ENCODE measurements at regions of chr1 and their contacts with region 1.

Region 1: DNA sequence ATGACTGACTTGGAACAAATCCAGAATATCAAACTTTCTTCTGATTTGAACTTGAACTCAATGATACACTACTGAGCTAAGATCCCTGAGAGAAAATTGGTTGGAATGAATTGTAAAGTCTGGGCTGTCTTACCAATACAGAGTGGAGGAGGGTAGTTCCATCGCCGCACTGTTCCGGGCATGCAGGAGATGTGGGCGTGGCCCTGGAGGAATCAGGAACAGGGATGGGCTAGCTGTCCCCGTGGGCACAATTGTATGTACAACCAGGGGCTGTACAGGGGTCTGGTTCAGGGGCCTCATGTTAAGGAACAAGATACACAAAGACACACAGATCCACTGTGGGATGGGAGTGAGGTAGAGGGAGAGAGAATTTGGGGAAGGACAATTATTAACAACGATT is 144.3 kb downstream of the ZSCAN20 start:
- DNase-seq: no peak
- H3K4me3 ChIP-seq: no peak overlapping the region
- H3K27ac ChIP-seq: no peak overlapping the region
- H3K4me1 ChIP-seq: no peaks in the 10 kb centered on the region
- H3K27me3 ChIP-seq: no peaks in the 10 kb centered on the region
- CTCF ChIP-seq: no peak
- POLR2A ChIP-seq: no peak

Region 2: DNA sequence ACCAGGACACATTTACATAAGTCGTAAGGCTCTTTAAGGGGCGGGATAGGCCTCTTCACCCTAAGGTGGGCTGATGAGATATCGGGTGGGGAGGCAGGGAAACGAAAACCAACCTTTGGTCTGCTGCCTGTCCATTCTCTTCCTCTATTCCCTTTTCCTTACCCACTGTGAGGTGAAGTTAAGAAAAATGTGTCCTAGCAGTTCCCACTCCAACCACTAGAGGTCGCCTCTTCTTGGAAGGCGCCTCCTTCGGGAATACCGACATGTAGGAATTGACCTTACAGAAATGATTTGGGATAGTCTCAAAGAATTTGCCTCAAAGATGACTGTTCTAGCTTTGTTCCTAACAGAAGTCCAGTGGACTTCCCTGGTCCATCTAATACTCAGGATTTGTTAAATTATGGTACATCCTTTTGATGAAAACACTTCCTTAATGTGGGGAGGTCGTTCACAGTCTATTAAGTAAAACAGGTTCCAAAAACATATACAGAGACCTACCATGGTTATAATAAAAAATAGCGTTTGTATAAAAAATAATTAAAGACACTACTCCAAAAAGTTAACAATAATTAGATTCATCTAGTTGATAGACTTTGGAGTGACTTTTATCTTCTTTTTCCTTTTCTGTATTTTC is 521.7 kb before region 1 on chr1:
- intact Hi-C with region 1: loop called in 1 of 2 experiments (anchors 10 kb)
- DNase-seq: peak in 6 of 7 donors; percentile 51 to 82 (median 64)
- H3K4me3 ChIP-seq: no peak overlapping the region
- H3K27ac ChIP-seq: no peak overlapping the region
- H3K4me1 ChIP-seq: peaks cover 6 to 14% of the 10 kb centered on the region in 2 donors
- H3K27me3 ChIP-seq: no peaks in the 10 kb centered on the region
- CTCF ChIP-seq: peak; percentile 84 to 99 (median 88)
- POLR2A ChIP-seq: no peak

Region 3: DNA sequence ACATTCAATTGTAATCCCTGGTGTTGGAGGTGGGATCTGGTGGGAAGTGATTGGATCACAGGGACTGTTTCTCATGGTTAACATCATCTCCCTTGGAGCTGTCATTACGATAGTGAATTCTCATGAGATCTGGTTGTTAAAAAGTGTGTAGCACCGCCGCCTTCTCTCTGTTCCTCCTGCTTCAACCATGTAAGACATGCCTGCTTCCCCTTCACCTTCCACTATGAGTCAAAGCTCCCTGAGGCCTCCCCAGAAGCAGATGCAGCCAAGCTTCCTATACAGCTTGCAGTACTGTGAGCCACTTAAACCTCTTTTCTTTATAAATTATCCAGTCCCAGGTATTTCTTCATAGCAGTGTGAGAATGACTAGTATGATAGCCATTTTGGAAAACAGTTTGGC is 404.8 kb before region 1 on chr1:
- intact Hi-C with region 1: no loop called
- DNase-seq: no peak
- H3K4me3 ChIP-seq: no peak overlapping the region
- H3K27ac ChIP-seq: no peak overlapping the region
- H3K4me1 ChIP-seq: no peaks in the 10 kb centered on the region
- H3K27me3 ChIP-seq: no peaks in the 10 kb centered on the region
- CTCF ChIP-seq: no peak
- POLR2A ChIP-seq: no peak

Region 4: DNA sequence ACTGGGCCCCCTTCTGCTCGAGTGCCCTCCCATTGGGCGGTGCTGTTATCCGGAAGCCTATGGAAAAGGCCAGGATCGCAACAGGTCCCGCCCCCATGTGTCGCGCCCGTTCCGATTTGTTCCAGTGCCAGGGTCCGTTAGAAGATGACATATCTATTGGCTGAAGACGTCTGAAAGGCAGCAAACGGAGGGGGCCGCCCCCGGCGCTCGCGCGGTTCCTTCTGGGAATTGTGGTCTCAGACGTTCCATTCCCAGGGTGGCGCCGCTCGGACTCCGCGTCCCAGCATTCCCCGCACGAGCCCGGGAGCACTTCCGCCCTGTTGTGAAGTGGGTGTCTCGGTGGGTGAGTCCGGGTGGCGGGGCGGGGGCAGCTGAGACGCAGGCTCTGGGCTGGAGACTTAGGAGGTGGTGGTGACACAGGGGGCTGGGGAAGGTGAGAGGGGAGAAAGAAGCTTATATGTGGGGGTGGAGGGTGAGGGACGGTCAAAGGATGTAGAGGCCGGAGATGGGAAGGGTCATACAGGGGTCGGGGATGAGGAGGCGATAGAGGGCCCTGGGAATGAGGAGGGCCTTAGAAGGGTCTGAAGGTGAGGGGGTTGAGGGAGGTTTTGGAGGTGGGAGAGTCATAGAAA is 144.3 kb before region 1 on chr1 and contains the start of gene ZSCAN20:
- intact Hi-C with region 1: loop called (anchors 5 to 10 kb)
- DNase-seq: peak; percentile 96 to 100 (median 98)
- H3K4me3 ChIP-seq: peak within 1 kb of the TSS in 3 of 4 donors; percentile 44 to 82 (median 74)
- H3K27ac ChIP-seq: peak within 1 kb of the TSS in 3 of 5 donors; percentile 48 to 68 (median 58)
- H3K4me1 ChIP-seq: peaks cover 9 to 28% of the 10 kb centered on the region in 2 donors
- H3K27me3 ChIP-seq: no peaks in the 10 kb centered on the region
- CTCF ChIP-seq: no peak
- POLR2A ChIP-seq: peak in 1 of 2 donors; percentile 30
- total RNA-seq, gene ZSCAN20: 3.6 to 12.7 (median 5.4) TPM

Measured in adrenal gland (tissue), 19 donors.